Sciatic nerve (tissue), 2 donors: ENCODE measurements at regions of chr16 and their contacts with region 1.

Region 1: GRCh38 chr16:79758615-79759341 is 158.2 kb upstream of the MAF start:
- DNase-seq: no peak
- ATAC-seq: no peak

Region 2: DNA sequence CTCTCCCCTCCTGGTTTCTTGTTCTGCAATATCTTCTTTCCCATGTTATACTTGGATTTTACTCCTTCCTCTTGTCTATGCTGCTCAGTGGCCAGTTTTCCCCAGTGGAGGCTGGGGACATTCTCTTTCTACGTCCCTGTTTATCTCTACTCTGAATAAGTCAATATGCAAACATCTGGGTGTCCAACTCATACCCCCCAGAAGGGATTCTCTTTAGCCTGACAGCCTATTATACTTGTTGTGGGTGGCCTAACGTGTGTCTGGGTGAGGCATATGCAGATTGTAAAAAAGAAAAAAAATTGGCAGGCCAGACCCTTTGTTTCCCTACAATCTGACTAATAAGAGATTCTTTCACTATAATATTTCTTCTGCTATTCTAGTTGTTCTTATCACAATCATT is 24.1 kb before region 1 on chr16:
- intact Hi-C with region 1: loop called (anchors 1 kb)
- DNase-seq: no peak
- ATAC-seq: no peak